ENCODE measurements at regions of chr4 and their contacts with region 1.

Region 1: DNA sequence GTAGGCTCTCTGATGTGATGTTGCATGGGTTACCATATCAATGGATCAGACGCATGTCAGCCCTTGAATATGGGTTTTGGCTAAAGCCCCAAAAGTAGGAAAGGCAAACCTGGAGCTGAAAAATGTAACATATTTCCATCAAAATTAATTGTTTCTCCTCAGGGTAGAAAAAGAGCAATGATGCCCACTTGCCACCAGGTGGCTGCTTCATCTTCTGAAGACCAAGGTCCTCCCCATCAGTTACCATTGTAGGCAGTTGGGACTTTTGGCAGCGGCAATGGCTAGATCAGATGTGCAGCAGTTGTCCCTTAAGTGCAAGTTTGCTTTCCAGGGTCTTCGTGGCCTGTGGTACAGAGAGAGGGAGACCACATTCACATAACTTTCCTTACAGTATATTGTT is 118.2 kb downstream of the NAF1 start:
- DNase-seq: peak in 1 of 2 experiments; percentile 2
- H3K4me3 ChIP-seq: no peak overlapping the region
- H3K27ac ChIP-seq: no peak overlapping the region
- H3K4me1 ChIP-seq: no peaks in the 10 kb centered on the region
- H3K27me3 ChIP-seq: no peaks in the 10 kb centered on the region
- CTCF ChIP-seq: peak; percentile 31 to 66 (median 59)
- EP300 ChIP-seq: no peak
- POLR2A ChIP-seq: no peak
- RAD21 ChIP-seq: peak; percentile 68 to 71

Region 2: DNA sequence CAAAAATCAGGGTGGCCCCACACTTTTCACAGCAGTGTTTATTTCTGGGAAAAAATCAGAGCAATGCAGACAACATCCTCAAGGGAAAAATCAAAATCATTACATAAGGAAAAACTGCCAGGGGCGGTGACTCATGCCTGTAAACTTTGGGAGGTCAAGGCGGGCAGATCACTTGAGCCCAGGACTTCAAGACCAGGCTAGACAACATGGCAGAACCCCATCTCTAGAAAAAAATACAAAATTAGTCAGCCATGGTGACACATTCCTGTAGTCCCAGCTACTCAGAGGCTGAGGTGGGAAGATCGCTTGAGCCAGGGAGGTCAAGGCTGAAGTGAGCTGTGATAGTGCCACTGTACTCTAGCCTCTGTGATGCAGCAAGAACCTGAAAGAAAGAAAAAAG is 15.4 kb after region 1 on chr4:
- CTCF ChIA-PET with region 1: interaction called, 17 read pairs
- POLR2A ChIA-PET with region 1: no interaction called
- DNase-seq: no peak
- H3K4me3 ChIP-seq: no peak overlapping the region
- H3K27ac ChIP-seq: no peak overlapping the region
- H3K4me1 ChIP-seq: no peaks in the 10 kb centered on the region
- H3K27me3 ChIP-seq: no peaks in the 10 kb centered on the region
- CTCF ChIP-seq: no peak
- EP300 ChIP-seq: no peak
- POLR2A ChIP-seq: no peak
- RAD21 ChIP-seq: no peak

Region 3: DNA sequence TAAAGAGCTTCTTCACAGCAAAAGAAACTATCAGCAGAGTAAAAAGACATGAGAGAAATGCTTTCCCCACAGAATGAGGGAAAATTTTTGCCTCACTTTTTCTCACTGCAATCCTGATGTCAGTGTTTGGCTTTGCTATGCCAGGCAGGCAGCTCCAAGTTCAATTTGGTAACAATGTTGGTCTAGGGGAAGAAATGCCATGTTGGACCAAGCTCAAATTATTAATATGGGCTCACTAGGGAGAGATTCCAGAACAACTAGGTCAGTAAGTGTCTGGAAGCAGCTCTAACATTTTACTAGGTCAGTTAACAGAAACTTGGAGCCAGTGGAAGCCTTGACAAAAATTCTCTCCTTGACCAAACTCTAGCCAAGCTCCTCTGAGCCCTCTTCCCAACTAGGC is 22.9 kb after region 1 on chr4:
- CTCF ChIA-PET with region 1: interaction called, 16 read pairs
- POLR2A ChIA-PET with region 1: no interaction called
- DNase-seq: no peak
- H3K4me3 ChIP-seq: no peak overlapping the region
- H3K27ac ChIP-seq: no peak overlapping the region
- H3K4me1 ChIP-seq: no peaks in the 10 kb centered on the region
- H3K27me3 ChIP-seq: no peaks in the 10 kb centered on the region
- CTCF ChIP-seq: no peak
- EP300 ChIP-seq: no peak
- POLR2A ChIP-seq: no peak
- RAD21 ChIP-seq: no peak

Region 4: GRCh38 chr4:163191999-163192398 is 143.6 kb after region 1 on chr4:
- CTCF ChIA-PET with region 1: interaction called, 12 read pairs
- POLR2A ChIA-PET with region 1: no interaction called
- DNase-seq: no peak
- H3K4me3 ChIP-seq: no peak overlapping the region
- H3K27ac ChIP-seq: no peak overlapping the region
- H3K4me1 ChIP-seq: no peaks in the 10 kb centered on the region
- H3K27me3 ChIP-seq: no peaks in the 10 kb centered on the region
- CTCF ChIP-seq: peak in 2 of 3 experiments; percentile 56; a peak in 3 of 4 replicates
- EP300 ChIP-seq: no peak
- POLR2A ChIP-seq: no peak
- RAD21 ChIP-seq: peak; percentile 61 to 71